ENCODE measurements at regions of chr10 and their contacts with region 1.

Region 1: GRCh38 chr10:90751107-90751997 is 106.5 kb downstream of the HTR7 start:
- DNase-seq: peak; percentile 56 to 63
- ATAC-seq: peak; percentile 89 to 98
- H3K4me3 ChIP-seq: no peak overlapping the region
- H3K27ac ChIP-seq: no peak overlapping the region
- H3K4me1 ChIP-seq: no peaks in the 10 kb centered on the region
- CTCF ChIP-seq: peak; percentile 87
- EP300 ChIP-seq: no peak
- POLR2A ChIP-seq: no peak
- RAD21 ChIP-seq: peak; percentile 88 to 90

Region 2: GRCh38 chr10:90787393-90788198 is 36.2 kb after region 1 on chr10:
- CTCF ChIA-PET with region 1: interaction called, 14 read pairs
- POLR2A ChIA-PET with region 1: no interaction called
- DNase-seq: peak; percentile 22 to 42
- ATAC-seq: peak; percentile 74 to 92; a peak in 5 of 6 replicates
- H3K4me3 ChIP-seq: no peak overlapping the region
- H3K27ac ChIP-seq: no peak overlapping the region
- H3K4me1 ChIP-seq: no peaks in the 10 kb centered on the region
- CTCF ChIP-seq: peak; percentile 71
- EP300 ChIP-seq: no peak
- POLR2A ChIP-seq: no peak
- RAD21 ChIP-seq: peak; percentile 65 to 72

Region 3: GRCh38 chr10:90862908-90863514 is 111.7 kb after region 1 on chr10:
- CTCF ChIA-PET with region 1: interaction called, 52 read pairs
- POLR2A ChIA-PET with region 1: no interaction called
- DNase-seq: peak; percentile 28 to 37
- ATAC-seq: peak in 1 of 2 experiments; percentile 51; a peak in 3 of 6 replicates
- H3K4me3 ChIP-seq: no peak overlapping the region
- H3K27ac ChIP-seq: no peak overlapping the region
- H3K4me1 ChIP-seq: peaks cover 9% of the 10 kb centered on the region; the same call in 2 of the 3 replicates
- CTCF ChIP-seq: peak; percentile 90
- EP300 ChIP-seq: no peak
- POLR2A ChIP-seq: no peak
- RAD21 ChIP-seq: peak; percentile 79 to 88

Region 4: GRCh38 chr10:90871766-90872647 is 120.7 kb after region 1 on chr10 and contains the start of gene RPP30:
- CTCF ChIA-PET with region 1: interaction called, 29 read pairs
- POLR2A ChIA-PET with region 1: no interaction called
- DNase-seq: peak; percentile 85 to 89
- ATAC-seq: peak; percentile 98 to 100
- H3K4me3 ChIP-seq: peak within 1 kb of the TSS; percentile 74
- H3K27ac ChIP-seq: peak within 1 kb of the TSS; percentile 75 to 90
- H3K4me1 ChIP-seq: peaks cover 7% of the 10 kb centered on the region; the same call in 2 of the 3 replicates
- CTCF ChIP-seq: no peak
- EP300 ChIP-seq: no peak
- POLR2A ChIP-seq: peak; percentile 73
- RAD21 ChIP-seq: no peak
- polyA plus RNA-seq, gene RPP30: 61.4 and 70.9 TPM in 2 replicates